Head of caudate nucleus (tissue), 42 donors: ENCODE measurements at regions of chr10 and their contacts with region 1.

Region 1: DNA sequence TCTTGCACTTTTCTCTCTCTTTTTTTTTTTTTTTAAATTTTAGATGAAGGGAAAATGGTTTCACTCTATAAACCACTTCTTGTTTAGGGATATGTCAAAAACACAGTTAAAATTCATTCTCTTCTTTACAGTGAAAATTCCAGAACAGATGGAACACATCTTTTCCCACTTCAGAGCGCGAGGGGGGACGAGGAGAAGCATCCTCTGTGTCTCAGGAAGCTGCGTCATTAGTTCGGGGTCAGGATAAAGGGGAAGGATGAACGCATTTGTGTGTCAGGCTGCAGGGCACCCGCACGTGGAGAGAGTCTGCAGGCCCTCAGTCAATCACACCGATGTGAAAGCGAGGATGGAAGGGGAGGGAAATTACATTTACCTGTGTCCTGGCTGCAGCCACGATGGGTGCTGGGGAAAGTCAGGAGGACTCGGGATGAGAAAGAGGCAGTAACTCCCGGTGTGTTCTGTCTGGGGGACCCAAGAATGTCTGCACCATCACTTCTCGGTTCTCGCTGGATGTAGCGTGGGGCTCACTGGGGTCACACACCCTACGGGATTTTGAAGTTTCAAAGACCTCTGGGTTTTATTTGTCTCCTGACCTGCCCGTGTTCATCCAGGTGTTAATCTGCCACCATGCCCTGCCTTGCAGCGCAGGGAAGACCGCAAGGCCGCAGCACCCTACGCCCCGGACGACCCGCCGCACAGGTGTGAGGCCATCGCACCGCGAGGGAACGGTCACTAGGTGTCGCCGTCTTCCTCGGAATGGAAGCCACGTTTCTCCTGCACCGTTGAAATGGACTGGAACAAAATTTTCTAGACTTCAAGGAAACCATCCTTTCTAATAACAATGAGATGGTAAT is 66.7 kb upstream of the PITRM1 start:
- DNase-seq: peak; percentile 58 to 88 (median 76)

Region 2: GRCh38 chr10:3281941-3282673 is 42.8 kb after region 1 on chr10:
- intact Hi-C with region 1: no loop called
- DNase-seq: no peak

Region 3: GRCh38 chr10:4656576-4657182 is 1417.4 kb after region 1 on chr10:
- intact Hi-C with region 1: loop called (anchors 5 kb)
- DNase-seq: peak; percentile 9 to 81 (median 50)